Mammary epithelial cell (primary cell): ENCODE measurements at regions of chr4 and their contacts with region 1.

Region 1: GRCh38 chr4:55866973-55867574 is 13.6 kb downstream of the EXOC1 start:
- DNase-seq: peak; percentile 54
- H3K4me3 ChIP-seq: no peak overlapping the region
- H3K27ac ChIP-seq: peak overlapping the region; percentile 59
- H3K4me1 ChIP-seq: peaks cover 20% of the 10 kb centered on the region
- H3K27me3 ChIP-seq: no peaks in the 10 kb centered on the region
- CTCF ChIP-seq: peak; percentile 82 to 88

Region 2: GRCh38 chr4:55635741-55636655 is 231.1 kb before region 1 on chr4 and contains the start of gene NMU:
- CTCF ChIA-PET with region 1: no interaction called
- dilution Hi-C with region 1: no loop called
- in situ Hi-C with region 1: no loop called
- intact Hi-C with region 1: loop called (anchors 5 kb)
- DNase-seq: peak; percentile 52
- H3K4me3 ChIP-seq: peak within 1 kb of the TSS; percentile 37 to 63 (median 53)
- H3K27ac ChIP-seq: no peak within 1 kb of the TSS
- H3K4me1 ChIP-seq: peaks cover 10% of the 10 kb centered on the region
- H3K27me3 ChIP-seq: no peaks in the 10 kb centered on the region
- CTCF ChIP-seq: peak in 1 of 2 donors; percentile 38
- total RNA-seq, gene NMU: 1.7 TPM in 1 of 2 donors, not detected in the other

Region 3: GRCh38 chr4:55754754-55755350 is 112.2 kb before region 1 on chr4:
- CTCF ChIA-PET with region 1: no interaction called
- dilution Hi-C with region 1: no loop called
- in situ Hi-C with region 1: no loop called
- intact Hi-C with region 1: loop called (anchors 2 kb)
- DNase-seq: peak; percentile 72
- H3K4me3 ChIP-seq: no peak overlapping the region
- H3K27ac ChIP-seq: peak overlapping the region; percentile 11
- H3K4me1 ChIP-seq: peaks cover 22% of the 10 kb centered on the region
- H3K27me3 ChIP-seq: no peaks in the 10 kb centered on the region
- CTCF ChIP-seq: no peak